ENCODE measurements at regions of chr1 and their contacts with region 1.

Region 1: GRCh38 chr1:161238039-161238473 is at the start of gene NR1I3:
- DNase-seq: no peak
- ATAC-seq: no peak
- H3K4me3 ChIP-seq: no peak within 1 kb of the TSS
- H3K4me3 Mint-ChIP-seq: no peak within 1 kb of the TSS
- H3K27ac ChIP-seq: no peak within 1 kb of the TSS
- H3K27ac Mint-ChIP-seq: no peak within 1 kb of the TSS
- H3K4me1 ChIP-seq: no peaks in the 10 kb centered on the region
- H3K4me1 Mint-ChIP-seq: no peaks in the 10 kb centered on the region
- H3K27me3 ChIP-seq: no peaks in the 10 kb centered on the region
- H3K27me3 Mint-ChIP-seq: no peaks in the 10 kb centered on the region
- CTCF ChIP-seq: no peak
- total RNA-seq, gene NR1I3: not detected

Region 2: GRCh38 chr1:161165742-161166668 is 72.1 kb before region 1 on chr1 and contains the start of gene PPOX:
- CTCF ChIA-PET with region 1: no interaction called
- POLR2A ChIA-PET with region 1: no interaction called
- intact Hi-C with region 1: no loop called
- DNase-seq: peak; percentile 81 to 97 (median 92)
- ATAC-seq: peak; percentile 91
- H3K4me3 ChIP-seq: peak within 1 kb of the TSS; percentile 58 to 79
- H3K4me3 Mint-ChIP-seq: peak within 1 kb of the TSS; percentile 88
- H3K27ac ChIP-seq: peak within 1 kb of the TSS; percentile 88 to 91
- H3K27ac Mint-ChIP-seq: peak within 1 kb of the TSS; percentile 98
- H3K4me1 ChIP-seq: peaks cover 29% of the 10 kb centered on the region
- H3K4me1 Mint-ChIP-seq: peaks cover 56% of the 10 kb centered on the region
- H3K27me3 ChIP-seq: no peaks in the 10 kb centered on the region
- H3K27me3 Mint-ChIP-seq: no peaks in the 10 kb centered on the region
- CTCF ChIP-seq: peak; percentile 52
- total RNA-seq, gene PPOX: 18.5 to 19.8 TPM

Region 3: DNA sequence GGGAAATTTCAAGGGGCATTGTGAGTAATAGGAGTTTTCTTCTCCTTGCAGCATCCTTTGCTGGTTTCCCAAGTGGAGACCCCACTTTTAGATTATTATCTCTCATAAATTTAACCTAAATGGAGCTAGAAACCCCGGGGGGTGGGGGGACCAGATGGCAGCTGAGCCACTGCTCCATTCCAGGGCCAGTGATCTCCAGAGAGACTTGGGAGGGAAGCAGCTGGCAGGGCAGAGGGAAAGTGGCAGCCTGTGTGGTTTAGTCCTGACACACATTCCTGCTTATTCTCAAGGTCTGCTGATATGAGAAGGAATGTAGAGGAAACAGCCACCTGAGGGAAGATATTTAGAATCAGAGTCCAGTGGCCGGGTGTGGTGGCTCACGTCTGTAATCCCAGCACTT is 36.8 kb after region 1 on chr1:
- CTCF ChIA-PET with region 1: no interaction called
- POLR2A ChIA-PET with region 1: no interaction called
- intact Hi-C with region 1: loop called in 1 of 2 experiments (anchors 5 kb)
- DNase-seq: no peak
- ATAC-seq: no peak
- H3K4me3 ChIP-seq: no peak overlapping the region
- H3K4me3 Mint-ChIP-seq: no peak overlapping the region
- H3K27ac ChIP-seq: no peak overlapping the region
- H3K27ac Mint-ChIP-seq: no peak overlapping the region
- H3K4me1 ChIP-seq: no peaks in the 10 kb centered on the region
- H3K4me1 Mint-ChIP-seq: no peaks in the 10 kb centered on the region
- H3K27me3 ChIP-seq: no peaks in the 10 kb centered on the region
- H3K27me3 Mint-ChIP-seq: peaks cover 3% of the 10 kb centered on the region
- CTCF ChIP-seq: no peak

Region 4: DNA sequence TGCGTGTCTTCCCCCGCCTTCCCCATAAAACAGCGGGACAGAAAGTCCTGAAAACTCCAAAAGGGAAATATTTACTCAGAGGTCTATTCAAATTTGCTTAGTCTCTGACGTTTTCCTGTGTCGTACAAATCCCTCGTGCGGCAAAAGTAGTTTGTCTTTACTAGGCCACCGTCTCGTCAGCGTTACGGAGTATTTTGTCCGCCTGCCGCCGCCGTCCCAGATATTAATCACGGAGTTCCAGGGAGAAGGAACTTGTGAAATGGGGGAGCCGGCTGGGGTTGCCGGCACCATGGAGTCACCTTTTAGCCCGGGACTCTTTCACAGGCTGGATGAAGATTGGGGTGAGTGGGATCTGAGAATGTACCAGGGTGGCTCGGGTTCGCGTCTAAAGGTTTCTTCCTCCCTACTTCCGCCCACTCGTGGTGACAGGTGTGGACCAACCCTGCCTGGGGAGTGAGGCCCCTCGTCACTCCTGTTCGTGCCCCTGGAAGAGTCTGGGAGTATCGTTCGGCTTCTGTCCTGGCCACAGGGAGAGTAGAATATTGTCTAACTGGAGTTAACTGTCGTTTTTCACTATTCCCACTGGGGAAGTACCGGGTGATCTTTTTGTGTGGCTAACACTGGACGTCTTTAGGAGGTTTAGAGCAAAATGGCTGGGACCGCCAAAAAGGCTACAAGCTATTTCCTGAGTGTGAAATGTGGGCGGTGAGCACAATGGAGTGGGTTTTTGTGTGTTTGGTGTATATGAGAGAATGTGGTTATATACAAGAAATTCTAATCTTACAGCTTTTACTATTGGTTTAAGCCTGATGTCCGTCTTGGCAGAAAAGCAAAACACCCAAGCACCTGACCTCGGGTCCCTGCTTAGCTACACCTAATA is 528.3 kb after region 1 on chr1 and contains the start of gene ATF6:
- CTCF ChIA-PET with region 1: no interaction called
- POLR2A ChIA-PET with region 1: no interaction called
- intact Hi-C with region 1: no loop called
- DNase-seq: peak; percentile 61 to 92 (median 79)
- ATAC-seq: peak; percentile 79
- H3K4me3 ChIP-seq: peak within 1 kb of the TSS; percentile 73 to 83
- H3K4me3 Mint-ChIP-seq: peak within 1 kb of the TSS; percentile 93
- H3K27ac ChIP-seq: peak within 1 kb of the TSS; percentile 84 to 89
- H3K27ac Mint-ChIP-seq: peak within 1 kb of the TSS; percentile 95
- H3K4me1 ChIP-seq: peaks cover 45% of the 10 kb centered on the region
- H3K4me1 Mint-ChIP-seq: peaks cover 37% of the 10 kb centered on the region
- H3K27me3 ChIP-seq: no peaks in the 10 kb centered on the region
- H3K27me3 Mint-ChIP-seq: no peaks in the 10 kb centered on the region
- CTCF ChIP-seq: no peak
- total RNA-seq, gene ATF6: 10.5 to 11.6 TPM

Region 5: DNA sequence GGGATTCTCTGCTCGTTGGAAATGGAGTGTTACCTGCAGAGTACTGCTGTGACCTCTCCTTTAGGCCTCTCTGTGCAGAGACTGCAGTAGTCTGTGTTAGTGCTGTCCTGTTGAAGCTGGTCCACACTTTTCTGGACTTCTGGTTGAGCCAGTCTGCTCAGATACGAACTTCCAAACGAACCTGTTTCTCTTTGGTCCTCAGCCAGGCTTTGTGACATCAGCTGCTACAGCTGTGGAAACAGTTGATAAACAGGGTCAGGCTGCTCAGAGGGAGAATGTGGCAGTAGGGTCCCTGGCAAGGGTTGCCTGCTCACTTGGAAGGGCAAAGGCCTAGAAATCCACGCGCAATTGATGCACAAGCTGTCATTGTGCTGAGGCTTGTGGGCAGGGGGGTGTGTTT is 930.2 kb after region 1 on chr1:
- CTCF ChIA-PET with region 1: no interaction called
- POLR2A ChIA-PET with region 1: no interaction called
- intact Hi-C with region 1: no loop called
- DNase-seq: no peak
- ATAC-seq: no peak
- H3K4me3 ChIP-seq: no peak overlapping the region
- H3K4me3 Mint-ChIP-seq: no peak overlapping the region
- H3K27ac ChIP-seq: no peak overlapping the region
- H3K27ac Mint-ChIP-seq: no peak overlapping the region
- H3K4me1 ChIP-seq: no peaks in the 10 kb centered on the region
- H3K4me1 Mint-ChIP-seq: no peaks in the 10 kb centered on the region
- H3K27me3 ChIP-seq: no peaks in the 10 kb centered on the region
- H3K27me3 Mint-ChIP-seq: peaks cover 27% of the 10 kb centered on the region
- CTCF ChIP-seq: no peak

Measured in CD8-positive, alpha-beta T cell (primary cell).